ENCODE measurements at regions of chr16 and their contacts with region 1.

Region 1: DNA sequence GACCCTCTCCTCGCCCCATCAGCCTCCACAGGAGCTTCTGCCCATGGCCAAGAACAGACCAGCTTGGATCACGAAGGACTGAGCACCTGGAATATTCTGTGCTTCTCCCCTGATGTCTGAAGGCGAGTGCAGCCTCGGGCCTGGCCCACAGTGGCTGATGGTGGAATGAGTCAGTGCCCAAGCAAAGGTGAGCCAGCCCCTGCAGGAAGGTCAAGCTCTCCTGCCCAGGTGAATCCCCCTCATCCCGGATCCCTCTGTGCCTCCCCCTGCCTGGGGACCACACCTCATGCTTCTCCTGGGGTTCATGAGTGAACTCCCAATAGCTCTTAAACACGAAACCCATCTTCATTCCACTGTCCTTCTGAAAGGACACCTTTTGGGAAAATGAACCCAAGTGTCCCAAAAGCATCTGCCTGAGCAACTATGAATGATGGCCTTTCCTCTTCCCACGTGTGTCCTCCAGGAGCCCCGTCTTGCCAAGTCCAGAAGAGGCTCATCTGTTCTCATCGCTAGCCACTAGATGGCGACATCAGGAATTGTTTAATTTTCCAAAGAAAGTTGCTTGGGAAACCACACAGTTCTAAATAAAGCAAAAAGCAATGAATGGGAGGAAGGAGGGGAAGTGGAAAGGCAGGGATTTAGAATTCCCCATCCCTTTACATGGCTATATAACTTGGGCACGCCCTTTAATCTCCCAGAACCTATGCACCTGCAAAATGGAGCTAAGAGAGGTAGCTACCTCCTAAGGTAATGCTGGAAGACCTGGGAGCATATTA is 9.2 kb upstream of the CDH5 start:
- DNase-seq: peak; percentile 84 to 89
- ATAC-seq: peak; percentile 60 to 83
- H3K4me3 ChIP-seq: no peak overlapping the region
- H3K27ac ChIP-seq: no peak overlapping the region
- H3K4me1 ChIP-seq: peaks cover 12% of the 10 kb centered on the region; the same call in 2 of the 3 replicates
- CTCF ChIP-seq: peak; percentile 74
- EP300 ChIP-seq: no peak
- POLR2A ChIP-seq: no peak
- RAD21 ChIP-seq: peak; percentile 47 to 65

Region 2: GRCh38 chr16:65975049-65976009 is 382.0 kb before region 1 on chr16:
- CTCF ChIA-PET with region 1: no interaction called
- POLR2A ChIA-PET with region 1: no interaction called
- DNase-seq: peak in 1 of 2 experiments; percentile 66
- ATAC-seq: peak in 1 of 2 experiments; percentile 44; a peak in 3 of 6 replicates
- H3K4me3 ChIP-seq: no peak overlapping the region
- H3K27ac ChIP-seq: peak overlapping the region; percentile 54 to 76; a peak in 5 of 6 replicates
- H3K4me1 ChIP-seq: no peaks in the 10 kb centered on the region
- CTCF ChIP-seq: no peak
- EP300 ChIP-seq: no peak
- POLR2A ChIP-seq: no peak
- RAD21 ChIP-seq: no peak

Region 3: GRCh38 chr16:66223176-66223780 is 134.1 kb before region 1 on chr16:
- CTCF ChIA-PET with region 1: no interaction called
- POLR2A ChIA-PET with region 1: no interaction called
- DNase-seq: no peak
- ATAC-seq: no peak
- H3K4me3 ChIP-seq: no peak overlapping the region
- H3K27ac ChIP-seq: no peak overlapping the region
- H3K4me1 ChIP-seq: no peaks in the 10 kb centered on the region
- CTCF ChIP-seq: no peak
- EP300 ChIP-seq: no peak
- POLR2A ChIP-seq: no peak
- RAD21 ChIP-seq: no peak

Region 4: GRCh38 chr16:66326991-66327513 is 30.3 kb before region 1 on chr16:
- CTCF ChIA-PET with region 1: interaction called, 16 read pairs
- POLR2A ChIA-PET with region 1: no interaction called
- DNase-seq: no peak
- ATAC-seq: no peak
- H3K4me3 ChIP-seq: no peak overlapping the region
- H3K27ac ChIP-seq: no peak overlapping the region
- H3K4me1 ChIP-seq: no peaks in the 10 kb centered on the region
- CTCF ChIP-seq: no peak
- EP300 ChIP-seq: no peak
- POLR2A ChIP-seq: no peak
- RAD21 ChIP-seq: no peak

Region 5: GRCh38 chr16:66376559-66377305 is 19.4 kb after region 1 on chr16:
- CTCF ChIA-PET with region 1: interaction called, 90 read pairs
- POLR2A ChIA-PET with region 1: no interaction called
- DNase-seq: no peak
- ATAC-seq: no peak
- H3K4me3 ChIP-seq: no peak overlapping the region
- H3K27ac ChIP-seq: no peak overlapping the region
- H3K4me1 ChIP-seq: peaks cover 6% of the 10 kb centered on the region; the same call in 2 of the 3 replicates
- CTCF ChIP-seq: no peak
- EP300 ChIP-seq: no peak
- POLR2A ChIP-seq: no peak
- RAD21 ChIP-seq: no peak

Region 6: DNA sequence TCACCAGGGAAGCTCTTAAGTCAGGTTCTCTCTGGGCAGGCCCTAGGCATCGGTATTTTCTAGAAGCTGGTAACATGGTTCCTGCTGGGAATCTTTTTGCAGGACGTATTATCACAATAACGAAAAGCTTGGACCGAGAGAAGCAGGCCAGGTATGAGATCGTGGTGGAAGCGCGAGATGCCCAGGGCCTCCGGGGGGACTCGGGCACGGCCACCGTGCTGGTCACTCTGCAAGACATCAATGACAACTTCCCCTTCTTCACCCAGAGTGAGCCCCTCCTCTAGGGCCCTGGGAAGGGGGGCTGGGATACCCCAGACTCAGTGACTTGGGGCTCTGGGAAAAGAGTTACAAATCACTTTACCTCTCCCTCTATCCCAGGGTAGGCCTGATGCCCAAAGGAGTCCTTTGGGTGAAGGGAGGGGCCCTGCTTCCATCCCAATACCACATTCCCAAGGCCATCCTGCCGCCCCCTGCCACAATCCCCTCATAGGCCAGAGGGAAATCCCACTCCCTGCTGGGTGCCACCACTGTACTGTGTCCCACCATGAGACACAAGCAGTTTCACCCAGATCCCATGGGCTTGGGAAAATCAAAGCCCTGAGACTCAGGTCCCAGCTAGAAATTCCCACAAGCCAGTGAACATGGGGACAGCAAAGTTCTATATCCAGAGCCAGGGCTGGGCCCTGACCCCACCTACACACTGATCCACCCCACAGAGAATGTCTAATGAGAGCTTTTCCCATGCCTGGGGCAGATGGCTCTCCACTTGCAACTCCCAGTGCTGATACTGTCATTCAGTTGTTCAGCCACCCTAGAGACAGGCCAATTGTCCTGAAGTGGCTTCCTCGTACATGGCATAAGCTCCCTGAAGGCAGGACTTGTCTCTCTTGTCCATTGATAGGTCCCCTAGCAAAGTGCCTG is 32.2 kb after region 1 on chr16:
- CTCF ChIA-PET with region 1: interaction called, 22 read pairs
- POLR2A ChIA-PET with region 1: no interaction called
- DNase-seq: no peak
- ATAC-seq: no peak
- H3K4me3 ChIP-seq: no peak overlapping the region
- H3K27ac ChIP-seq: no peak overlapping the region
- H3K4me1 ChIP-seq: no peaks in the 10 kb centered on the region
- CTCF ChIP-seq: no peak
- EP300 ChIP-seq: no peak
- POLR2A ChIP-seq: no peak
- RAD21 ChIP-seq: no peak

Region 7: GRCh38 chr16:66483689-66484481 is 126.5 kb after region 1 on chr16:
- CTCF ChIA-PET with region 1: interaction called, 11 read pairs
- POLR2A ChIA-PET with region 1: no interaction called
- DNase-seq: peak; percentile 80
- ATAC-seq: peak; percentile 71 to 89
- H3K4me3 ChIP-seq: no peak overlapping the region
- H3K27ac ChIP-seq: peak overlapping the region; percentile 64 to 79; a peak in 5 of 6 replicates
- H3K4me1 ChIP-seq: peaks cover 26% of the 10 kb centered on the region
- CTCF ChIP-seq: peak; percentile 92
- EP300 ChIP-seq: no peak
- POLR2A ChIP-seq: no peak
- RAD21 ChIP-seq: peak; percentile 91 to 93